Gastrocnemius medialis (tissue), 4 donors: ENCODE measurements at regions of chr16 and their contacts with region 1.

Region 1: DNA sequence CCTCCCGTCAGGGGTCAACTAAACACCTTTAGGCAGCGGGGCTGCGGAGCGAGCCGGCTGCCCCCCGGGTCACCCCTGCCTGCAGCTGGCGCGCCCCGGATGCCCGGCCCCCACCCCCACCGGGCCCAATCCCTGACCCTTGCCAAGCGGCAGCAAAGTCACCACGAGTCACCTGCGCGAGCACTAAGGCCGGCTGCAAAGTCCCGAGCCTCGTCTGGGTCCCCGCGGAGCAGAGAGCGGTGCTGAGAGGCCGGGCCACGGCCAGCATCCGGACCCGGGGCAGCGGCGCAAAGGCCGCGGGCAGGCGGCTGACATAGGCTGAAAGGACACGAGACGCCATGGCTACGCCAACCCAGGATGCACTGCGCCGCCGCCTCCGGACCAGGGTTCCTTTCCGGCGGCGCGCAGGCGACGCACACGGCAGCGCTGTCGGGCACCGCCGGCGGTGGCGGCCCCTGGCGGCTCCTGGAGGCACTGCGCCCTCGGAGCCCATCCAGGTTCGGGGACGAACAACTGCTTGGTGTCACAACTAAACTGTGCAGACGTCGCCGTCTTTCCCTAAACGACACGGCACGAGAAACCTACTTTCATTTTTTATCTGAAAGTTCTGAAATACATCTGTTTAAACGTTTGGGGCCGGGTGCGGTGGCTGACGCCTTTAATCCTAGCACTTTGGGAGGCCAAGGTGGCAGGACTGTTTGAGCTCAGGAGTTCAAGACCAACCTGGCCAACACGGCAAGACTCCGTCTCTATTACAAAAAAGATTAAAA is at the start of gene NDUFAB1:
- DNase-seq: peak; percentile 82 to 89
- ATAC-seq: peak; percentile 83 to 87
- H3K4me3 ChIP-seq: peak within 1 kb of the TSS; percentile 88 to 100 (median 97)
- H3K27ac ChIP-seq: peak within 1 kb of the TSS; percentile 94 to 99 (median 96)
- H3K4me1 ChIP-seq: peaks cover 26 to 35% of the 10 kb centered on the region in 2 donors
- H3K27me3 ChIP-seq: no peaks in the 10 kb centered on the region
- CTCF ChIP-seq: peak; percentile 93 to 100 (median 100)
- POLR2A ChIP-seq: peak; percentile 8 to 42
- total RNA-seq, gene NDUFAB1: 166 to 400 (median 323) TPM

Region 2: DNA sequence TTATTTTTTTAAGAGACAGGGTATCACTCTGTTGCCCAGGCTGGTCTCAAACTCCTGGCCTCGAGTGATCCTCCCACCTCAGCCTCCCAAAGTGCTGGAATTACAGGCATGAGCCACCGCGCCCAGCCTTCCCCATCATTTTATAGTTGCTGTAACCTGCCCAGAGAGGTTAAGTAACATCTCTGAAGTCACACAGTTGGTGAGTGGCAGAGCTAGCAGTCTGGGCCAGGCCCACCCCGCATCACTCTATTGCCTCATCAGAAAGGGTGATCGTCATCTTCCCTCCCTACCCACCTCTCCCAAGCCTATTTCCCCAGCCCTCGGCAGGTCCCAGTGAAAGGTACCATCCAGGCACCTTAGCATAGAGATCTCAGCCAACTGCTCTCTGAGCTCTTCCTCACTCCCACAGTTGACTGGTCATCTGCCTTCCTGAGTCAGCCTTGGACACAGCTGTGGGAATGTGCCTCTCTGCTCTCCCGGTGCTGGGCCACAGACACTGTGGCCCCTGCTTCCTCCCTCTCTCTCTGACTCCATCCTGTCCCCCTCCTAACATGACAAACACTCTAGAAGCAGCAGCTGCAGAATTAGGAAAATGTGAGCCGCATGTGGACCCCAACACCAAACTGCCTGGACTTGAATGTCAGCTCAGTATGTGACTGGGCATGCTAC is 236.9 kb before region 1 on chr16:
- in situ Hi-C with region 1: no loop called
- intact Hi-C with region 1: no loop called
- DNase-seq: no peak
- ATAC-seq: no peak
- H3K4me3 ChIP-seq: no peak overlapping the region
- H3K27ac ChIP-seq: no peak overlapping the region
- H3K4me1 ChIP-seq: peaks cover 0 to 10% of the 10 kb centered on the region in 2 donors
- H3K27me3 ChIP-seq: no peaks in the 10 kb centered on the region
- CTCF ChIP-seq: no peak
- POLR2A ChIP-seq: no peak

Region 3: DNA sequence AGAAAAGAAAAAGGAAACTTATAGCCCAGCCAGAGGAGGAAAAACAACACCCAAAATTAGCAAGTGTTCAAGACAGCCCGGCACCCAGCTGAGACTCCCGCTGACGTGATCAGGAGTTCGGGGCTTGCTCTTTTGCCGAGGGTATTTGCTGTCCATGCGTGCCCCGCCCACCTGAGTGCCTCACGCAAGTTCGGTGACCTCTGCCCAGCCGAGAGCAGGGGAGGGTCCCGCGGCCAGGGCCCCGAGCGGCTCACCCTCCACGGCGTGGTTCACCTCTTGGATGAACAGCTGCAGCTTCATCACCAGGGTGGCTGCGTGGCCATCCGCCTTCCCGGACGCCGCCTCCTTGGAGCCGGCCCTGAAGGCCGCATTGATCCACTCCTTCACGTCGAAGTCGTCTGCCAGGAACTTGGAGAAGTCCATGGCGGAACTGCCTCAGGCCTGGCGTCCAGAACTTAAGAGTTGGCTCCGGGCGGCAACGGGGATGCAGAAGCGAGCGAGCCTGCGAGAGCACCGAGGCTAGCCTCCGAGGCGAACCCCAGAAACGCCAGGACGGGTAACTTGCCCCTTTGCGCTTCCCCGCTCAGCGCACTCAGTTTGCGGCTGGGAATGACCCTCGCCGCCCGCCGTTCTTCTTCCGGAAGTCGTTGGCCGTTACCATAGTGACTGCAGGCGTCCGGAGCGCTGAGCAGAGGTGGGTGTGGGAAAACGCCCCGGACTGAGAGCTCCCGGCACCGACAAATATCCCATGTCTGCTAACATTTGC is 143.4 kb before region 1 on chr16 and contains the start of gene COG7:
- in situ Hi-C with region 1: no loop called
- intact Hi-C with region 1: loop called (anchors 5 kb)
- DNase-seq: peak; percentile 69 to 79
- ATAC-seq: peak; percentile 93 to 94
- H3K4me3 ChIP-seq: peak within 1 kb of the TSS; percentile 74 to 90 (median 78)
- H3K27ac ChIP-seq: peak within 1 kb of the TSS; percentile 77 to 87 (median 82)
- H3K4me1 ChIP-seq: peaks cover 4 to 33% of the 10 kb centered on the region in 2 donors
- H3K27me3 ChIP-seq: no peaks in the 10 kb centered on the region
- CTCF ChIP-seq: no peak
- POLR2A ChIP-seq: no peak
- total RNA-seq, gene COG7: 6.6 to 12.9 (median 7.1) TPM

Region 4: GRCh38 chr16:23510164-23510914 is 85.8 kb before region 1 on chr16 and contains the start of gene GGA2:
- in situ Hi-C with region 1: no loop called
- intact Hi-C with region 1: loop called (anchors 2 kb)
- DNase-seq: peak; percentile 69 to 82
- ATAC-seq: peak; percentile 89 to 91
- H3K4me3 ChIP-seq: peak within 1 kb of the TSS; percentile 70 to 86 (median 78)
- H3K27ac ChIP-seq: peak within 1 kb of the TSS; percentile 84 to 92 (median 92)
- H3K4me1 ChIP-seq: peaks cover 12 to 28% of the 10 kb centered on the region in 2 donors
- H3K27me3 ChIP-seq: no peaks in the 10 kb centered on the region
- CTCF ChIP-seq: peak in 3 of 5 experiments; percentile 5 to 12 (median 11)
- POLR2A ChIP-seq: peak; percentile 95 to 96
- total RNA-seq, gene GGA2: 31.0 to 79.9 (median 48.8) TPM

Region 5: DNA sequence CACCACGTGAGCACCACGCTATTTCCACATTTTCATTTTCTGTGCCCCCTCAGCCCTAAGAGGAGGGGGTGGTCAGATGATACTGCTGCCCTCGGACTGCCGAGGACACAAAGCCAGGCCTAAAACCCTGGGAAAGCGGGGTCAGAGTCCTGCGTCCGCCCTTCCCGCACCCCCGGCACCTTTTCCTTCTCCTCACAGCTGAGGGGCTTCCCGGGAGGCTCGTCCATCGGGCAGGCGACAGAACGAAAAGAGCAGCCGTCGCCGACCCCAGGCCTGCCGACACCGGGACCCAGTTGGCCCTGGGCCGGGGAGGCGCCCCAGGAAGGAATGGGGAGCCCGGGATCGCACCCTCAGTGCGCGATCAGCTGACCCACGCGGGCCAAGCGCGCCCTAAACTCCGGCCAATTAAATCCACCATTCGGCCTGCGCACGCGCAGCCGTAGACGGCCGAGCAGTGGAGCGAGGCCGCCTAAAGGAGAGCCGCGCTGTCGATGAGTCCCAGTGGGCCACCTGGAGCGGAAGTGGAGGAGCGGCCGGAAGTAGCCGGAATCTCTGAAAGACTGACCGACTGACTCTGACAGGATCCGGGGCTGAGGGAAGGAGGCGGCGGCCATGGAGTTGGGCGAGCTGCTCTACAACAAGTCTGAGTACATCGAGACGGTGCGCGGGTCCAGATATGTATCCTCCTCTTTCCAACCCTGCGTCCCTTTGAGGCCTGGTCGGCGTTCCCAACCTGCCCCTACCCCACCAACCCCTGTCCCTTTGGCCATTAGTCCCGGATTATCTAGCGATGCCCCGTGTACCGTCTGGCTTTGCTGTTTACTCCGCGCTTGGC is 45.0 kb after region 1 on chr16 and contains the starts of genes DCTN5 and PALB2:
- in situ Hi-C with region 1: no loop called
- intact Hi-C with region 1: loop called (anchors 1 kb)
- DNase-seq: peak; percentile 90 to 94
- ATAC-seq: peak; percentile 99 to 100
- H3K4me3 ChIP-seq: peak within 1 kb of the TSS; percentile 89 to 100 (median 96)
- H3K27ac ChIP-seq: peak within 1 kb of the TSS; percentile 89 to 95 (median 92)
- H3K4me1 ChIP-seq: peaks cover 20 to 23% of the 10 kb centered on the region in 2 donors
- H3K27me3 ChIP-seq: no peaks in the 10 kb centered on the region
- CTCF ChIP-seq: peak in 2 of 5 experiments; percentile 11 to 13
- POLR2A ChIP-seq: peak; percentile 48 to 67
- total RNA-seq, gene DCTN5: 22.9 to 34.4 (median 24.8) TPM
- total RNA-seq, gene PALB2: 6.0 to 11.0 (median 7.3) TPM